Right lobe of liver (tissue), 6 donors: ENCODE measurements at regions of chr1 and their contacts with region 1.

Region 1: DNA sequence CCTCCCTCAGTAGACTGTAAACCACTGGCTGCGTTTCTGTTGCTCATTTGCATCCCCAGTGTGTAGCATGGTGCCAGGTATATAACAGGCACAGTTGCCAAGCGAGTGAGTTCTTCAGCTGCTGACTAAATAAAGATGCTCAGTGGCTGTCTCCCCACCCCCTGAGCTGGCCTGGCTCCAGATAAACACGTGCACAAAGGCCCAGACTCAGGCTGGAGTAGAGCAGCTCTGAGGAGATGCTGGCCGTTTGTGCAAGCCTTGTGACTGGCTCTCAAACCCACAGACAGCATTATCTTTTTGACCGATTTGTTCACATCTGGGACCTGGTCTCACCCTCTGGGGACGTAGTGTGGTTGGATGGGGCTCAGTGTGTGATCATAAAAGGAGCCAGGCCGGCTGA is 7.1 kb downstream of the CHRNB2 start:
- DNase-seq: no peak
- ATAC-seq: no peak
- H3K4me3 ChIP-seq: no peak overlapping the region
- H3K27ac ChIP-seq: no peak overlapping the region
- H3K4me1 ChIP-seq: no peaks in the 10 kb centered on the region
- H3K27me3 ChIP-seq: no peaks in the 10 kb centered on the region
- CTCF ChIP-seq: no peak
- POLR2A ChIP-seq: no peak

Region 2: GRCh38 chr1:154871374-154871773 is 296.7 kb after region 1 on chr1:
- intact Hi-C with region 1: no loop called
- DNase-seq: no peak
- ATAC-seq: no peak
- H3K4me3 ChIP-seq: no peak overlapping the region
- H3K27ac ChIP-seq: no peak overlapping the region
- H3K4me1 ChIP-seq: peaks cover 0 to 11% (median 0%) of the 10 kb centered on the region in 4 donors
- H3K27me3 ChIP-seq: no peaks in the 10 kb centered on the region
- CTCF ChIP-seq: no peak
- POLR2A ChIP-seq: no peak

Region 3: GRCh38 chr1:154896771-154897391 is 322.2 kb after region 1 on chr1:
- intact Hi-C with region 1: loop called in 1 of 2 experiments (anchors 10 kb)
- DNase-seq: no peak
- ATAC-seq: peak in 1 of 4 donors; percentile 32
- H3K4me3 ChIP-seq: no peak overlapping the region
- H3K27ac ChIP-seq: no peak overlapping the region
- H3K4me1 ChIP-seq: no peaks in the 10 kb centered on the region
- H3K27me3 ChIP-seq: no peaks in the 10 kb centered on the region
- CTCF ChIP-seq: no peak
- POLR2A ChIP-seq: no peak